GM18951 (cell line): ENCODE measurements at regions of chr5 and their contacts with region 1.

Region 1: DNA sequence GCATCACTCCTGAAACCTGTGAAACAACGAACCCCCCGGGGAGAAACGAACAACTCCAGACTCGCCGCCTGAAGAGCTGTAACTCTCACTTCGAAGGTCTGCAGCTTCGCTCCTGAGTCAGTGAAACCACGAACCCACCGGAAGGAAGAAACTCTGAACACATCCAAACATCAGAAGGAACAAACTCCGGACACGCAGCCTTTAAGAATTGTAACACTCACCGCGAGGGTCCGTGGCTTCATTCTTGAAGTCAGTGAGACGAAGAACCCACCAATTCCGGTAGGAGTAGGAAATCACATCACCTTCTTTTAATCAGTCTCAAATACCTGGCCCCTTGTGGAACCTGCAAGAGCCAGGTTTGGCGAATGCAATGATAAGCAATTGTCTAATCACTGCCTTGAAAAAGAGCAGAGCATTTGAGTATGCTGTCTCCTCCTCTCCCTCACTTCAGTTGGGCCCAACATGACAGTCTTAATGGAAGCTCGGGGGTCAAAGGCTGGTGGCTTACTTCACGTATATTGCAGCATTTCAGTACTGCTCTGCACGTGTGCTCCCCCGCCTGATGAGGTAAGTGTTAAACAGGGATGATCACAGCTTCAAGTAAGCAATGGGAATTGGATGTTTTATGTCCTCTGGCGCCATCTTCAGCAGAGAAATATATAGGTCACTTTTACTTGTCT is 473 bp downstream of the IRGM start:
- POLR2A ChIP-seq: no peak

Region 2: GRCh38 chr5:150377964-150378694 is 468.7 kb before region 1 on chr5:
- in situ Hi-C with region 1: no loop called
- POLR2A ChIP-seq: no peak

Region 3: GRCh38 chr5:150560401-150561193 is 286.2 kb before region 1 on chr5:
- in situ Hi-C with region 1: loop called (anchors 5 kb)
- POLR2A ChIP-seq: no peak